HepG2 (cell line): ENCODE measurements at regions of chr20 and their contacts with region 1.

Region 1: GRCh38 chr20:57351042-57351783 is at the start of gene RAE1:
- DNase-seq: peak; percentile 95
- ATAC-seq: peak; percentile 92
- H3K4me3 ChIP-seq: peak within 1 kb of the TSS; percentile 92 to 96 (median 93)
- H3K27ac ChIP-seq: peak within 1 kb of the TSS; percentile 72
- H3K4me1 ChIP-seq: peaks cover 18% of the 10 kb centered on the region
- H3K27me3 ChIP-seq: no peaks in the 10 kb centered on the region; a peak in 1 of 5 replicates
- CTCF ChIP-seq: no peak
- EP300 ChIP-seq: no peak
- POLR2A ChIP-seq: peak; percentile 92 to 97
- RAD21 ChIP-seq: no peak; the same call in 1 of the 2 replicates
- total RNA-seq, gene RAE1: 72.9 and 84.7 TPM in 2 replicates

Region 2: DNA sequence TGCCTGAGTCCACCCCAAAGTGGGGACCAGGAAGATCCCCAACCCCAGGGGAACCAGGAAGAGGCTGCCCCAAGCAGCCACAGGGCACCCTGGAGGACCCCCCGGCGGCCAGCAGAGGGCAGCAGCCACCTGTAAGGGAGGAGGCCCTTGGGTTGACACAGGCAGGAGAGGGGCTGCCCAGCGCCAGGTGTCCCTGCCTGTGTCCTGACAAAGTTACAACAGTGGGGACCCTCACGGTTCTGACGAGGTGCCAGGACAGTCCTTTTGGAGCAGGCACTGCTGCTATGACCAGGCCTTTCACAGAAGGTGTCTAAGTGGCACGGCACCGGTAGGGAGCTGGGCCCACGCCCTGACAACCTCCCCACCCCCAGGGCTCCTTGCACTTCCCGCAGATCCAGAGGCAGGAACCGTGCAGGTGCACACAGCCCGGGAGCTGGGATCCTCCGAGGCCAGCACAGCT is 261.5 kb before region 1 on chr20:
- CTCF ChIA-PET with region 1: interaction called, 176 read pairs
- POLR2A ChIA-PET with region 1: no interaction called
- in situ Hi-C with region 1: no loop called
- intact Hi-C with region 1: loop called (anchors 1 kb)
- DNase-seq: peak; percentile 63
- ATAC-seq: peak; percentile 94
- H3K4me3 ChIP-seq: no peak overlapping the region
- H3K27ac ChIP-seq: no peak overlapping the region
- H3K4me1 ChIP-seq: no peaks in the 10 kb centered on the region
- H3K27me3 ChIP-seq: peaks cover 2 to 41% of the 10 kb centered on the region in 2 experiments; a peak in 4 of 5 replicates
- CTCF ChIP-seq: peak; percentile 99
- EP300 ChIP-seq: no peak
- POLR2A ChIP-seq: no peak
- RAD21 ChIP-seq: peak; percentile 97

Region 3: DNA sequence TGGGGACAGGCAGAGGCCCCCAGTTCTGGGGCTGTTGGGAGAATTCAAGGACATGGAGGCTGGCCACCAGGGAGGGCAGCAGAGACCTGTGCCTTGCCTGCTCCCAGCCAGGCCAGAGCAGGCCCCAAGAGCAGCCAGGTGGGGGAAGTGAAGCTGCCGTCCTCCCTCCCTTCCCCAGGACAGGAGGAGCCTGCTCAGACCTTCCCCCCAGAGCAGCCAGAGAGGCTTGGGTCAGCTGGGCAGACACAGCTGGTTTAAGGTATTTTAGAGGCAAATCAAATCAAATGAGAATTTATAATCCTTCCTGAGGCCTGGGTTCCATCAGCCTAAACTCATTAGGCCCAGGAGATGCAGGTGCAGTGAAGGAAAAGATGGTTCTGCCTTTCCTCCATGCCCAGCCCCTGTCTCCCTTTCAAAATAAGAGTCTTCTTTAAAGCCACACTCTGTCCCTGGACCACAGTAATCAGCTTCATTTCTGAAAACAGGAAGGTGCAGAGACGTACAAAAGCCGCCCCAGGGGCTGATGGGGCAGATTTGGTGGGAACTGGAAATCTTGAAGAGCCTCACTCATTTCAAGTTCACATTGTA is 106.5 kb before region 1 on chr20:
- CTCF ChIA-PET with region 1: no interaction called
- POLR2A ChIA-PET with region 1: no interaction called
- in situ Hi-C with region 1: no loop called
- intact Hi-C with region 1: loop called (anchors 10 kb)
- DNase-seq: no peak
- ATAC-seq: peak; percentile 78
- H3K4me3 ChIP-seq: no peak overlapping the region
- H3K27ac ChIP-seq: no peak overlapping the region
- H3K4me1 ChIP-seq: no peaks in the 10 kb centered on the region
- H3K27me3 ChIP-seq: peaks cover 2 to 9% of the 10 kb centered on the region in 2 experiments; a peak in 3 of 5 replicates
- CTCF ChIP-seq: peak; percentile 19; the same call in 1 of the 2 replicates
- EP300 ChIP-seq: no peak
- POLR2A ChIP-seq: no peak
- RAD21 ChIP-seq: no peak

Region 4: GRCh38 chr20:57263801-57264792 is 87.1 kb before region 1 on chr20:
- CTCF ChIA-PET with region 1: no interaction called
- POLR2A ChIA-PET with region 1: no interaction called
- in situ Hi-C with region 1: no loop called
- intact Hi-C with region 1: loop called (anchors 5 kb)
- DNase-seq: peak; percentile 69
- ATAC-seq: peak; percentile 73
- H3K4me3 ChIP-seq: peak overlapping the region in 1 of 3 experiments; percentile 20; a peak in 2 of 6 replicates
- H3K27ac ChIP-seq: no peak overlapping the region
- H3K4me1 ChIP-seq: peaks cover 23% of the 10 kb centered on the region
- H3K27me3 ChIP-seq: peaks cover 31 to 96% of the 10 kb centered on the region in 2 experiments
- CTCF ChIP-seq: no peak
- EP300 ChIP-seq: peak in 1 of 2 experiments; percentile 42; a peak in 1 of 4 replicates
- POLR2A ChIP-seq: no peak
- RAD21 ChIP-seq: no peak

Region 5: DNA sequence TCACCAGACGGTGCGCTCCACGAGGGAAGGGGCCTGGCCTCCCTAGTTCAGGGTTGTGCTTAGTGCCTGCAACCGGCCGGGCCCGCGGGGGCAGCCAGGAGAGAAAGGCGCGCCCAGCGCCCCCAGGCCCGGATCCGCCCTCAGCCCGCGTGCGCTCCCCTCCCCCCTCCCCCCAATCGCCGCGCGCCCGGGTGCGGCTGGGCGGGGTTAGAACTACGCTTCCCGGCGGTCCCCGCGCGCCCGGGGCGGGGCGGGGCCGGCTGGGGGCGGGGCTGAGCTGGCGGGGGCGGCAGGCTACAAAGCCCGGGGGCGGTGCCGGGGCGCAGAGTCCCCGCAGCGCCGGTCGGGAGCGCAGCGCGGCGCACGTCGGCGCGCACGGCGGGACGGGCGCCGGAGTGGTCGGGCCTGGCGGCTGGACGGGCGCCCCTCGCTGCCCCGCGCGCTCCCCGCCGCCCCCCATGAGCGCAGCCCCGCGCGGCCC is 39.9 kb after region 1 on chr20 and contains the start of gene RBM38:
- CTCF ChIA-PET with region 1: no interaction called
- POLR2A ChIA-PET with region 1: interaction called, 3 read pairs
- in situ Hi-C with region 1: no loop called
- intact Hi-C with region 1: loop called (anchors 2 kb)
- DNase-seq: peak; percentile 56
- ATAC-seq: peak; percentile 72
- H3K4me3 ChIP-seq: peak within 1 kb of the TSS; percentile 76 to 97 (median 96)
- H3K27ac ChIP-seq: peak within 1 kb of the TSS; percentile 58
- H3K4me1 ChIP-seq: peaks cover 37% of the 10 kb centered on the region
- H3K27me3 ChIP-seq: no peaks in the 10 kb centered on the region
- CTCF ChIP-seq: no peak
- EP300 ChIP-seq: no peak
- POLR2A ChIP-seq: peak in 1 of 2 experiments; percentile 46; a peak in 2 of 4 replicates
- RAD21 ChIP-seq: no peak
- total RNA-seq, gene RBM38: 29.6 and 34.2 TPM in 2 replicates

Region 6: GRCh38 chr20:57498425-57499400 is 147.5 kb after region 1 on chr20:
- CTCF ChIA-PET with region 1: no interaction called
- POLR2A ChIA-PET with region 1: no interaction called
- in situ Hi-C with region 1: no loop called
- intact Hi-C with region 1: loop called (anchors 1 kb)
- DNase-seq: no peak
- ATAC-seq: peak; percentile 80
- H3K4me3 ChIP-seq: no peak overlapping the region
- H3K27ac ChIP-seq: no peak overlapping the region
- H3K4me1 ChIP-seq: no peaks in the 10 kb centered on the region; the same call in 1 of the 2 replicates
- H3K27me3 ChIP-seq: peaks cover 4 to 40% of the 10 kb centered on the region in 2 experiments; a peak in 4 of 5 replicates
- CTCF ChIP-seq: peak; percentile 63
- EP300 ChIP-seq: no peak
- POLR2A ChIP-seq: no peak
- RAD21 ChIP-seq: no peak

Region 7: DNA sequence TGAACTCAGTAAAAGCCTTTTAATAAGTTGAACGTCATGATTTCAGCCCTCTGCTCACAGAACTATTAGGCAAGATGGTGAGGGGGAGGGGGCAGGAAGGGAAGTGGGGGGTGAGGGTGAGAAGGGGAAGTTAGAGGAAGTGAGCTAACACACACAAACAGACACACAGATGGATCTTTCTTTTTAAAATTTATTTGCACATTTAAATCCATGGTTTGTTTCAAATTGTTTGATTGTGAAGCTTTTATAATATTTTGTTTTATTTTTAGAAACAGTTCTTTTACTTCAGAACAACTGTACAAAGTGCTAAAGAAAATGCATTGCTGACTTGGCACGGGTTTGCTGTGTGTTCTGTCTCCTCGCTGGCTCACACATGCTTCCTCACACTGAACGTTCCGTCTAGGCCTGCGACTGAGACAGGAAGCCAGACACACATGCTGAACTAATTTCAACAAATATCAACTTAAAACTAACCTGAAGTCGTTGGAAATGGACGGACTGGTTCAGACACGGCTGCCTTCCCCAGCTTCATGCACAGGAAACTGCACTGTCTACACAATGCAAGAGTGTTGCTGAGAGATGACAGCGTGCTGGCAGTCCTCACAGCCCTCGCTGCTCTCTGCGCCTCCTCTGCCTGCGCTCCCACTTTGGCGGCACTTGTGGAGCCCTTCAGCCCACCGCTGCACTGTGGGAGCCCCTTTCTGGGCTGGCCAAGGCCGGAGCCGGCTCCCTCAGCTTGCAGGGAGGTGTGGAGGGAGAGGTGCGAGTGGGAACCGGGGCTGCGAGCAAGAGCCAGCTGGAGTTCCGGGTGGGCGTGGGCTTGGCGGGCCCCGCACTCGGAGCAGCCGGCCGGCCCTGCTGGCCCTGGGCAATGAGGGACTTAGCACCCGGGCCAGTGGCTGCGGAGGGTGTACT is 277.1 kb after region 1 on chr20:
- CTCF ChIA-PET with region 1: no interaction called
- POLR2A ChIA-PET with region 1: no interaction called
- in situ Hi-C with region 1: no loop called
- intact Hi-C with region 1: no loop called
- DNase-seq: no peak
- ATAC-seq: peak; percentile 39; the same call in 1 of the 3 replicates
- H3K4me3 ChIP-seq: no peak overlapping the region
- H3K27ac ChIP-seq: no peak overlapping the region
- H3K4me1 ChIP-seq: no peaks in the 10 kb centered on the region
- H3K27me3 ChIP-seq: peaks cover 0 to 28% of the 10 kb centered on the region in 2 experiments; a peak in 3 of 5 replicates
- CTCF ChIP-seq: no peak
- EP300 ChIP-seq: no peak
- POLR2A ChIP-seq: no peak
- RAD21 ChIP-seq: no peak